ENCODE measurements at regions of chr7 and their contacts with region 1.

Region 1: DNA sequence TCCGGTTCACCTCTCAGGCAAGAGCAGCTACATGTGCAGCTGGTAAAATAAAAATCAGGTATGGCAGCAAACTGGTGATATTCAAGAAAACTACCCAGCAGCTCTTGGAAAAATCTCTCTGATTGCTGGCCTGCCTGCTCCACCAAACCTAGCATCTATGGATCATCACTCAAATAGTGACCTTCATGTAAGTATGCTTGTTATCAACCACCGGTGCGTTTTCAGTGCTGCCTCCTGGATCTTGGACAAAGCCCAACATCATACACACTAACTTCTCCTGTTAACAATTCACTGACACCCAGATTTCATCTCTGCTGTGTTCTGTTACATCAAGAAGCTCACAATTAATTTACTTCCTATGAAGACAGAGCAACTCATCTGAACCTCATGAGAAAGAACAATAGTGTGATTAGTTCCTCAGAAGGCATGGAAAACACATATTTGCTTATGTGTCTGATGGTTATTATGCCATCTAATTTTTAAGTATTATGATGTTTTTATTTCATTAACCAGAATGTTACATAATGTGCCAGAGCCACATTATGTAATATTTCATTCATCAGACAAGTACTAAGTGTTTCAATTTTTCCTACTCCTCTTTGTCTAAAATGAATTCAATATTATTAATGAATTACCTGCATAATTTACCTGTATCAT is 8.8 kb downstream of the CDK6 start:
- DNase-seq: no peak
- ATAC-seq: no peak
- H3K4me3 ChIP-seq: no peak overlapping the region
- H3K27ac ChIP-seq: no peak overlapping the region
- H3K4me1 ChIP-seq: peaks cover 2 to 57% of the 10 kb centered on the region in 2 donors
- H3K27me3 ChIP-seq: no peaks in the 10 kb centered on the region
- CTCF ChIP-seq: no peak

Region 2: DNA sequence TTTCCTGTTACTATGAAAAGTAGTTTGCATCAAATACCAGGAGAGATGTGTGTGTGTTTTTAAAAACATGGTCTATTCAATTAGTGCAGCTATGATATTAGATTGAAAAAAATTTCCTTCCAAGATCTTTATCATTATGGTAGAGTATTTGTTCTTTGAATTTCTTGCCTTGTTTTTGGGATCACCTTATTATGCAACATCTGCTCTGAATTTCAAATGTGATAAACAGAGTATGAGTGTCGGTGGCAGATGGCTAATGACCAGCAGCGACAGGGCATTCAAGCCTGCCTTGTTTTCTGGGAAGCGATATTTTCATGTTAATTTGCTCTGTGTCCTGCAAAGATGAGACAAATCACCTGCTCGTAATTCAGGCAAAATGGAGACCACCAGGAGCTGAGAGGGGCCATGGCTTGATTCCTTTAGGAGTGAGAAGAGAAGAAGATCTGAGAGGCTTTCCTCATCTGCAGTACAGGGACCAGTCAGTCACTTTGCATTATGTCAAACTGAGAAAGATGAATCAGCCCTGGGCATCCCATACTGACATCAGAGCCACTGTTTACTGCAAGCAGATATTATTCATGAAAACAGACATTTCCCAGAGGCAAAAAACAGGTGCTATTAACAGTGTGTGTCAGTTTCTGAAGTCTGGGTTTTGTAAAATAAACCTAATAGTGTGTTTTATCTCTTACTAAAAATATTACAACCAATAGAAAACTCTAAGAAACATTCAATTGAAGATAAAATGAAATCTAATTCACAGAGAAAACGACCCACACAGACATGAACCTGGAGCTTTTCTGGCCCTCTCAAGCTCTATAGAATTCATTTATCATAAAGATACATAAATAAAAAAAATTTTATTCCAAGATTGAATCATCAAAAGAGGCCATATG is 58.8 kb before region 1 on chr7:
- intact Hi-C with region 1: loop called in 1 of 2 experiments (anchors 10 kb)
- DNase-seq: no peak
- ATAC-seq: no peak
- H3K4me3 ChIP-seq: no peak overlapping the region
- H3K27ac ChIP-seq: no peak overlapping the region
- H3K4me1 ChIP-seq: peaks cover 13 to 14% of the 10 kb centered on the region in 2 donors
- H3K27me3 ChIP-seq: no peaks in the 10 kb centered on the region
- CTCF ChIP-seq: no peak

Region 3: GRCh38 chr7:92953657-92954056 is 126.1 kb after region 1 on chr7:
- intact Hi-C with region 1: no loop called
- DNase-seq: no peak
- ATAC-seq: no peak
- H3K4me3 ChIP-seq: no peak overlapping the region
- H3K27ac ChIP-seq: no peak overlapping the region
- H3K4me1 ChIP-seq: no peaks in the 10 kb centered on the region
- H3K27me3 ChIP-seq: no peaks in the 10 kb centered on the region
- CTCF ChIP-seq: no peak